T-cell (primary cell): ENCODE measurements at regions of chr19 and their contacts with region 1.

Region 1: DNA sequence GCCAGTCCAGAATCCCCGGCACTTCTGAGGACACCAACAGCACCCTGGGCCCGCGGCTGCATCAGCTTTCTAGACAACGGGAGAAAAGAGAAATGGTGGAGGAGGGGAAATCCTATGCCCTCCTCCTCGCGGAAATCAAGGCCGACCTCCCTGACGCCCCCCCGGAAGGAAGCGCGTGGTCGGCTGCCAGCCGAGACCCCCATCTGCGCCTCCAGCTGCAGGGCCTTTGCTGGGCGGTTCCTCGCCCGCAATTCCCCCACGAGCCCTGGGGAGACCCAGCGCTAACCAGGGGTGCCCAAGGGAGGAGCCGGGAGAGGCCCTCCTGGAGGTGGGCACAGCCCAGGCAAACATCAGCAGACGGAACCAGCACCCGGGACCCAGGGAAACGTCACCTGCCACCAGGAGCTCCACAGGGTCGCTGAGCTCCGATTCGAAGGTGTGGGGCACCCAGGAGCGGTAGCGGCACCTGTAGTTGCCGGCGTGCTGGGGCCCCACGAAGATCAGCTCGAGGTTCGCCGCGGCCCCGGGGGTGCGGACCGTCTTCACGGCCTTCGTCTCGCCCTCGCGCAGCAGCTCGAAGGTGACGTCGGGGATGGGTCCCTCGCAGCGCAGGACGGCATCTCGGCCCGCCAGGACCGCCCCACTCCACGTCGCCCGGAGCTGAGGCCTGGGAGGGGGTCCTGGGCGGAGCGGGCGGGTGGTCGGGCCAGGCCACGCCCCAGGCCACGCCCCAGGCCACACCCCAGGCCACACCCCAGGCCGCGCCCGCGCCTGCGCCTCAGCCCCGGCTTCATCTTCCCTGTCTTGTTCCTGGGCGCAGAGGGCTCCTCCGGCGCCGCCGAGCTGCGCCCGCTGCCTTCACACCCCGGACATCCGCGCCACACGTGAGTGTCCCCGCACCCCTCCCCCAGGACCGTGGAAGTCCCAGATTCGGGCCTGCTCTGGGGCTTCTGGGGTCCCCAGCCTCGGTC is 6.0 kb downstream of the A1BG start:
- DNase-seq: peak; percentile 14 to 82 (median 48)
- ATAC-seq: peak; percentile 90 to 94 (median 91)
- H3K4me3 ChIP-seq: peak overlapping the region; percentile 58 to 76
- H3K4me3 Mint-ChIP-seq: peak overlapping the region; percentile 86 to 90 (median 88)
- H3K27ac ChIP-seq: peak overlapping the region; percentile 73
- H3K27ac Mint-ChIP-seq: peak overlapping the region; percentile 81 to 83
- H3K4me1 ChIP-seq: peaks cover 9 to 17% of the 10 kb centered on the region in 2 experiments
- H3K4me1 Mint-ChIP-seq: peaks cover 29 to 35% (median 31%) of the 10 kb centered on the region in 3 donors
- H3K27me3 ChIP-seq: peaks cover 0 to 19% of the 10 kb centered on the region in 2 experiments
- H3K27me3 Mint-ChIP-seq: peaks cover 0 to 7% of the 10 kb centered on the region in 2 donors

Region 2: DNA sequence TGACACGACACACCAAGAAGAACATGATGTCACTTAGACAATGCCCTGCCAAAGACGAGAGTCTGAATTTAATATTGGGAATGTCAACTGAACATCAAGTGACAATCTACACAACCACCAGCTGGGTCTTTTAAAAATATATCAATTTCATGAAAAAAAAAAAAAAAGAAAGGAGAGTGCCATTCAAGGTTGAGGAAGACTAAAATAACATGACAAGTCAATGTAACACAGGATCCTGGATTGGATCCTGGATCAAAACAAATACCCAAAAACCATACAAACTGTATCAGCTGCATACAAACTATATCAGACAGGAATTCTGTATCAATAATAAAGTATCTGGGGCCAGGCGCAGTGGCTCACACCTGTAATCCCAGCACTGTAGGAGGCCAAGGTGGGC is 201.4 kb before region 1 on chr19:
- CTCF ChIA-PET with region 1: no interaction called
- POLR2A ChIA-PET with region 1: interaction called in 1 of 2 experiments, 10 read pairs
- DNase-seq: no peak
- ATAC-seq: no peak
- H3K4me3 ChIP-seq: no peak overlapping the region
- H3K4me3 Mint-ChIP-seq: no peak overlapping the region
- H3K27ac ChIP-seq: no peak overlapping the region
- H3K27ac Mint-ChIP-seq: no peak overlapping the region
- H3K4me1 ChIP-seq: peaks cover 5 to 6% of the 10 kb centered on the region in 2 experiments
- H3K4me1 Mint-ChIP-seq: peaks cover 13 to 17% (median 13%) of the 10 kb centered on the region in 3 donors
- H3K27me3 ChIP-seq: peaks cover 0 to 4% of the 10 kb centered on the region in 2 experiments
- H3K27me3 Mint-ChIP-seq: no peaks in the 10 kb centered on the region

Region 3: DNA sequence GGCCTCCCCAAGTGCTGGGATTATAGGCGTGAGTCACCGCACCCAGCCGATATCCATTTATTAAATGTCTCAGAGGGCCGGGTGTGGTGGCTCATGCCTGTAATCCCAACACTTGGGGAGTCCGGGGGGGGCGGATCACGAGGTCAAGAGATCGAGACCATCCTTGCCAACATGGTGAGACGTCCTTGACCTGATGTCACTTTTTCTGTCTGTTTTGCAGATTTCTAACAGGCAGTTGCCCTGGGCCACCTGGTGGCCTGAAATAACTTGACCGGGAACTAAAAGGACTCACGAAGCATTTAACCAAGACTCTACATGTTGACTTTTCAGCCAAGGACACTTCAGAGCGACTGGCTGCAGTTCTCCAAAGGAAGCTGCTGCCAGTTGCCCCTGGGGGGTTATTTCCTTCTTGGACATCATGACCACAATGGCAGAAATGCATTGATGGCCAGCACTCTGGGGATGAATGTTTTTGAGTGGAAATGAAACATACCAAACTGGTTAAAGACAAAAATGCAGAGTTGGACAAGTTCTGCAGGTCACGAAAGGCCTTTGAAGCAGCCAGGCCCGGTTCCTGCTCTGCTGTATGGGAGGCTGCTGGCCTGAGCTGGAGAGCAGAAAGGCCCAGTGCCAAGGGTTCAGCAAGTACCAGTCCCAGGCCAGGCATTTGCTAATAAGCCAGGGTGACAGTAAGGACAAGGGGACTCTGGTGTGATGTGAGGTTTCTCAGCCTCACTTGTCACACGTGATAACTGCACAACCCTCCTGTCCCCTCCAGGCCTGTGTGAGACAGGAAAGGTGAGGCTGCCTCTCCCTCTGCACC is 25.3 kb after region 1 on chr19:
- CTCF ChIA-PET with region 1: no interaction called
- POLR2A ChIA-PET with region 1: no interaction called
- DNase-seq: no peak
- ATAC-seq: no peak
- H3K4me3 ChIP-seq: no peak overlapping the region
- H3K4me3 Mint-ChIP-seq: no peak overlapping the region
- H3K27ac ChIP-seq: no peak overlapping the region
- H3K27ac Mint-ChIP-seq: no peak overlapping the region
- H3K4me1 ChIP-seq: no peaks in the 10 kb centered on the region
- H3K4me1 Mint-ChIP-seq: no peaks in the 10 kb centered on the region
- H3K27me3 ChIP-seq: no peaks in the 10 kb centered on the region
- H3K27me3 Mint-ChIP-seq: no peaks in the 10 kb centered on the region